Heart left ventricle (tissue), 16 donors: ENCODE measurements at regions of chr12 and their contacts with region 1.

Region 1: DNA sequence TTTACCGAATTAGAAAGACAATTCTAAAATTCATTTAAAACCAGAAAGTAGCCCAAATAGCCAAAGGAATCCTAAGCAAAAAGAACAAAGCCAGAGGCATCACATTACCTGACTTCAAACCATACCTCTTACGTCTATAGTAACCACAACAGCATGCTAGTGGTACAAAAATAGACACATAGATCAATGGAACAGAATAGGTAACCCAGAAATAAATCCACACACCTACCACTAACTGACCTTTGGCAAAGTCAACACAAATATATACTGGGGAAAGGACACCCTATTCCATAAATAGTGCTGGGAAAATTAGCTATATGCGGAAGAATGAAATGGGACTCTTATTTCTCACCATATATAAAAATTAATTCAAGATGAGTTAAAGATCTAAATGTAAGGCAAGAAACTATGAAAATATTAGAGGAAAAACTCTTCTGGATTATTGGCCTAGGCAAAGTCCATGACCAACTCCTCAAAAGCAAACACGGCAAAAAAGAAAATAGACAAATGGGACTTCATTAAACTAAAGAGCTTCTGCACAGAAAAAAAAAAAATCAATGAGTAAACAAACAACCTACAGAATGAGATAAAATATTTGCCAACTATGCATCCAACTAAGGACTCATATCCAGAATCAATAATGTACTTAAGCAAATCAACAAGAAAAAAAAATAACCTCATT is 568.9 kb downstream of the SOX5 start:
- DNase-seq: no peak
- ATAC-seq: no peak
- H3K4me3 ChIP-seq: no peak overlapping the region
- H3K27ac ChIP-seq: no peak overlapping the region
- H3K4me1 ChIP-seq: no peaks in the 10 kb centered on the region
- H3K27me3 ChIP-seq: no peaks in the 10 kb centered on the region
- CTCF ChIP-seq: no peak
- POLR2A ChIP-seq: no peak

Region 2: DNA sequence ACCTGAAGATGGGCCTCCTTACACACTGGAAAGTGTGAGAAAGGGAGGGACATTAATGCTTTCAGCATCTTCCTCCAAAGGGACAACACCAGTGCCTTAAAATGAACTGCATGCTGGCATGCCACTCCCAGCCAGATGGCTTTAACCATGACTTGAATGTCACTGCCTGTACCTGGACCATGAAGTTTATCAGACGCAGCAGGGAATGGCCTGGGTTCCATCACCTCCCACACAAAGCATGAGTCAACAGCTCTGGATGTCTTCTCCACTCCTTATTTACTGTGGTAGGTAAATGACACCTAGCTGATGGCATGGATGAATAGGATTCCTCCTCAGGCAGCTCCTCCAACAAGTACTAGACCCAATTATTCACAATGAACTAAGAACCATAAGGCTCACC is 76.7 kb before region 1 on chr12:
- intact Hi-C with region 1: no loop called
- DNase-seq: no peak
- ATAC-seq: no peak
- H3K4me3 ChIP-seq: no peak overlapping the region
- H3K27ac ChIP-seq: no peak overlapping the region
- H3K4me1 ChIP-seq: no peaks in the 10 kb centered on the region
- H3K27me3 ChIP-seq: no peaks in the 10 kb centered on the region
- CTCF ChIP-seq: no peak
- POLR2A ChIP-seq: no peak

Region 3: GRCh38 chr12:23431006-23431405 is 50.4 kb after region 1 on chr12:
- intact Hi-C with region 1: loop called in 1 of 10 experiments (anchors 5 kb)
- DNase-seq: no peak
- ATAC-seq: no peak
- H3K4me3 ChIP-seq: no peak overlapping the region
- H3K27ac ChIP-seq: no peak overlapping the region
- H3K4me1 ChIP-seq: no peaks in the 10 kb centered on the region
- H3K27me3 ChIP-seq: no peaks in the 10 kb centered on the region
- CTCF ChIP-seq: no peak
- POLR2A ChIP-seq: no peak